Common myeloid progenitor, CD34-positive (primary cell): ENCODE measurements at regions of chr11 and their contacts with region 1.

Region 1: GRCh38 chr11:61417670-61418069 is 12.1 kb downstream of the CPSF7 start:
- DNase-seq: peak; percentile 76 to 95 (median 94)
- H3K4me3 ChIP-seq: no peak overlapping the region
- H3K27ac ChIP-seq: peak overlapping the region; percentile 81 to 89
- H3K4me1 ChIP-seq: peaks cover 0 to 17% (median 14%) of the 10 kb centered on the region in 4 experiments
- H3K27me3 ChIP-seq: no peaks in the 10 kb centered on the region

Region 2: DNA sequence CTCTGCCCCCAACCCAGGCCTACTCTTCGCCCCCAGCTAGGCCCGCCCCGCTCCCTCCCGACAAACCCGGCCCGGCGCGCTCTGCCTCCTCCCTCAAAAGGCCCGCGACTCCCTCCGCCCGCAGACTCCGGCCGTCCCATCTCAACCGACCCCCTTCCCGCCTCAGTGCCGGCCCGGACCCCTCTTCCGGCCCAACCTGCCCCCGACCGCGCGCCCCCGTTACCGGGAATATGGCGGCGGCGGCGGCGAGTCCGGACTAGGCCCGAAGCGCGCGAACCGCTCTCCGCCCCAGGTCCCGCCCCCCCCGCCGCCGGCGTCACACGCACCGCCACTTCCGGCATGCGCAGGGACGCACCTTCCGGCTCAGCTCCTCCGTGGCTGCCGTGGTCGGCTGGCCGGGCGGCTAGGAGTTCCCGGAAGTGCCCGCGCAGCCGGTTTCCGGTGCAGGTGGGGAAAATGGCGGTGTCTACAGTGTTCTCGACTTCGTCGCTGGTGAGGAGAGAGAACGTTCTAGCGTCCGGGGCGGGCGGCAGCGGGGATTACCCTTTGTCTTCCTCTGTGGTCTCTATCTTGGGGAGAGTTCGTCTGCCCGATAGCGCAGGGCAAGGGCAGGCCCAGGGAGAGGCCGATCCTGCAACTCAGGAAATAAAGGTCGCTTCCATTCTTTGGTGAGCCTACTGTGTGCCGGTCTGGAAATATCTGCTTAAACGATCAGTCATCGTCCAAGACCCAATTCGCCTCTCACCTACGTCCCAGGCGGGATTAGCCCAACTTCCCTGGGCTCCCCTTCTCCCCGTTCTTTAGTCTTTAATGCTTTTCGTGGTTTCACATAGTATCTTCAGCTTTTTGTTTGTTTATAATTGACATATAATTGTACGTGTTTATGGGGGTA is 12.3 kb after region 1 on chr11 and contains the starts of genes CPSF7 and SDHAF2:
- CTCF ChIA-PET with region 1: interaction called, 9 read pairs
- POLR2A ChIA-PET with region 1: interaction called, 11 read pairs
- DNase-seq: peak; percentile 96 to 99 (median 98)
- H3K4me3 ChIP-seq: peak within 1 kb of the TSS; percentile 49 to 100 (median 88)
- H3K27ac ChIP-seq: peak within 1 kb of the TSS; percentile 97 to 98
- H3K4me1 ChIP-seq: peaks cover 10 to 28% (median 19%) of the 10 kb centered on the region in 4 experiments
- H3K27me3 ChIP-seq: no peaks in the 10 kb centered on the region